Activated CD4-positive, alpha-beta T cell treated with anti-CD3 and anti-CD28 coated beads, Interleukin-2, amount 10 ng/mL, durations not matched to agents 24 days and 14 days (primary cell): ENCODE measurements at regions of chrX and their contacts with region 1.

Region 1: GRCh38 chrX:45322382-45322781 is 121.7 kb upstream of the DIPK2B start:
- DNase-seq: peak; percentile 59
- H3K4me3 Mint-ChIP-seq: no peak overlapping the region
- H3K27ac Mint-ChIP-seq: no peak overlapping the region
- H3K4me1 Mint-ChIP-seq: no peaks in the 10 kb centered on the region
- H3K27me3 Mint-ChIP-seq: no peaks in the 10 kb centered on the region

Region 2: DNA sequence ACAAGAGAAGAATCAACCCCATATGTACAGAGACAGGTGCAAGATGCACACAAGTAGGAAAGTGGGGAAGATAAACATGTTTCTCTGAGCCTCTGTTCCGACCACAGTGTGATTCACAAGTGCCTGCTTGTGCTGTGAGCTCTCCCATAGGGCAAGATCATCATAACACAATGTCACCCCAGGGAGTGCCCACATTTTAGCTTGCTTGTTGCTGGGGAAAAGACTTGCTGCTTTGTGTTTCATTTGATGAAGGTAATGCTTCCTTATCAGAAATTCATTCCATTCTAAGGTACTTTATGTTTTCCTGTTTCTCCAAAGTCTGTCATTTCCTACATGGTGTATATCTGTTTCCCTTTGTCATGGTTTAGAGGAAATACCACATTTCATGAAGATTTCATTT is 182.8 kb after region 1 on chrX:
- intact Hi-C with region 1: loop called (anchors 10 kb)
- DNase-seq: no peak
- H3K4me3 Mint-ChIP-seq: no peak overlapping the region
- H3K27ac Mint-ChIP-seq: peak overlapping the region; percentile 71
- H3K4me1 Mint-ChIP-seq: peaks cover 6% of the 10 kb centered on the region
- H3K27me3 Mint-ChIP-seq: no peaks in the 10 kb centered on the region

Region 3: DNA sequence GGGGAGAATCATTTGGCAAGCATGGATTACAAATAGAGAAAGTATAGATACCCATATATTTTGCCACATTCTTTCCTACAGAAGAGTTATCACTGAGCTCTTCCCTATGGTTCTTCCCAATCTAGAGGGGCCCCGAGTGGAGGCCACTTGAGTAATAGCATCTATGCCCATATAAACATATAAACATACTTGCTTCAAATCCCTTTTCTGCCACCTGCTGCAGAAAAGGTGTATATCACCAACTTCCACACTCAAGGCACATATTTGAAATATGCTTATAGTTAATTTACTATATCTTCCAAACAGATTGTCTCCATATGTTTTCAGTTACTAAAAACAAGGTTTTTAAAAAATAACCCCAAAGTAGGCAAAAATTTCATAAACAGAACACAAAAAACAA is 521.1 kb after region 1 on chrX:
- intact Hi-C with region 1: loop called (anchors 2 kb)
- DNase-seq: peak; percentile 62
- H3K4me3 Mint-ChIP-seq: peak overlapping the region; percentile 80
- H3K27ac Mint-ChIP-seq: peak overlapping the region; percentile 87
- H3K4me1 Mint-ChIP-seq: peaks cover 39% of the 10 kb centered on the region
- H3K27me3 Mint-ChIP-seq: no peaks in the 10 kb centered on the region